SK-N-SH (cell line): ENCODE measurements at regions of chr11 and their contacts with region 1.

Region 1: GRCh38 chr11:69642913-69643632 is 2.1 kb downstream of the CCND1 start:
- DNase-seq: peak; percentile 84
- H3K4me3 ChIP-seq: peak overlapping the region; percentile 95 to 96
- H3K27ac ChIP-seq: peak overlapping the region; percentile 94
- H3K4me1 ChIP-seq: peaks cover 29 to 37% of the 10 kb centered on the region in 2 experiments; a peak in 3 of 4 replicates
- H3K27me3 ChIP-seq: no peaks in the 10 kb centered on the region
- CTCF ChIP-seq: peak; percentile 83
- EP300 ChIP-seq: no peak
- RAD21 ChIP-seq: peak; percentile 86

Region 2: GRCh38 chr11:69131644-69132300 is 511.3 kb before region 1 on chr11:
- CTCF ChIA-PET with region 1: interaction called, 22 read pairs
- POLR2A ChIA-PET with region 1: interaction called, 3 read pairs
- DNase-seq: peak; percentile 70
- H3K4me3 ChIP-seq: no peak overlapping the region
- H3K27ac ChIP-seq: 0 out of 4 replicates have a peak overlapping the region, but pooled peaks of 1 of the 2 experiments have one; percentile 8
- H3K4me1 ChIP-seq: peaks cover 0 to 15% of the 10 kb centered on the region in 2 experiments; a peak in 1 of 4 replicates
- H3K27me3 ChIP-seq: no peaks in the 10 kb centered on the region
- CTCF ChIP-seq: peak; percentile 75
- EP300 ChIP-seq: no peak
- RAD21 ChIP-seq: peak; percentile 78

Region 3: DNA sequence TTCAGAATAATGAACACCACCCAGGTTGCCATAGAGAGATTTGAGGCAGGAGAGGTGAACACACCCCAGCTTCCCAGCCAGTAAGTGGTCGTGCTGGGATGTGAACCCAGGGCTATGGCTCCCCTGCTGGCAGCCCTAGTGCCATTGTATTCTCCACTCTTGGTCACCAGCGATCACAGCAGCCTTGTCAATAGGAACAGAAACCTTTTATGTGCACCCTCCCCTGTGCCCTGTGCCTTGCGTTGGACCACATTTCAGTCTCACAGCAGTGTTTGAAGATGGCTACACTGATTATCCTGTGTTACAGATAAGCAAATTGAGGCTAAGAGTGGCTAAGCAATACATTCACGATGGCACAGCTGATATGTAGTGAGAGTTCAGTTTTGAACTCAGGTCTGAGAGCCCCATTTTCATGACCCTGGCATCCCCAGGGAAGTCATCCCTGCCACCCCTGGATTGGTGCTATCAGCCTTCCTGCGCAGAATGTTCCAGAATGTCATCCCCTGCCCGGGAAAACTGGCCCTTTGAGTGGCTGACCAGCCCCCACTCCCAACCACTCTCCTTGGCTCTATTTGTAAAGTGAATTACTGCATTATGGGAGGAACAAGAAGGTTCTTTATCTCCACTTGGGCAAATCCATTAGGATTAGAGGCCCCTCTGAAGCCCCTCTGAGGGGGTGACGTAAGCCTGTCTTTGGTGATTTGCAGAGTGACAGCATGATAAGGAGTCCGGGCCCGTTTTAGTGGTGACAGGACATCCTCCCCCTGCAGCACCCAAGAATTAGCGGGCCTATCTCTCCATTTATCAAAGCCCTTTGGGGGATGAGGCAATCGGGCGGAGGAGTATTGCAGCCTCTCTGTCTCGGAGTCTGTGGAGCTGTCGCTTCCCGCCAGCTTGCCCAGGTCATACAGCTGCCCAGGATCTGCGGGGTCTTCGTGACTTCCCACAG is 456.5 kb before region 1 on chr11:
- CTCF ChIA-PET with region 1: interaction called, 10 read pairs
- POLR2A ChIA-PET with region 1: interaction called, 4 read pairs
- DNase-seq: peak; percentile 88
- H3K4me3 ChIP-seq: no peak overlapping the region
- H3K27ac ChIP-seq: peak overlapping the region in 1 of 2 experiments; percentile 94; a peak in 3 of 4 replicates
- H3K4me1 ChIP-seq: peaks cover 0 to 14% of the 10 kb centered on the region in 2 experiments; a peak in 2 of 4 replicates
- H3K27me3 ChIP-seq: peaks cover 4% of the 10 kb centered on the region; the same call in 1 of the 2 replicates
- CTCF ChIP-seq: peak; percentile 26
- EP300 ChIP-seq: peak; percentile 62 to 96; a peak in 3 of 4 replicates
- RAD21 ChIP-seq: peak; percentile 65

Region 4: DNA sequence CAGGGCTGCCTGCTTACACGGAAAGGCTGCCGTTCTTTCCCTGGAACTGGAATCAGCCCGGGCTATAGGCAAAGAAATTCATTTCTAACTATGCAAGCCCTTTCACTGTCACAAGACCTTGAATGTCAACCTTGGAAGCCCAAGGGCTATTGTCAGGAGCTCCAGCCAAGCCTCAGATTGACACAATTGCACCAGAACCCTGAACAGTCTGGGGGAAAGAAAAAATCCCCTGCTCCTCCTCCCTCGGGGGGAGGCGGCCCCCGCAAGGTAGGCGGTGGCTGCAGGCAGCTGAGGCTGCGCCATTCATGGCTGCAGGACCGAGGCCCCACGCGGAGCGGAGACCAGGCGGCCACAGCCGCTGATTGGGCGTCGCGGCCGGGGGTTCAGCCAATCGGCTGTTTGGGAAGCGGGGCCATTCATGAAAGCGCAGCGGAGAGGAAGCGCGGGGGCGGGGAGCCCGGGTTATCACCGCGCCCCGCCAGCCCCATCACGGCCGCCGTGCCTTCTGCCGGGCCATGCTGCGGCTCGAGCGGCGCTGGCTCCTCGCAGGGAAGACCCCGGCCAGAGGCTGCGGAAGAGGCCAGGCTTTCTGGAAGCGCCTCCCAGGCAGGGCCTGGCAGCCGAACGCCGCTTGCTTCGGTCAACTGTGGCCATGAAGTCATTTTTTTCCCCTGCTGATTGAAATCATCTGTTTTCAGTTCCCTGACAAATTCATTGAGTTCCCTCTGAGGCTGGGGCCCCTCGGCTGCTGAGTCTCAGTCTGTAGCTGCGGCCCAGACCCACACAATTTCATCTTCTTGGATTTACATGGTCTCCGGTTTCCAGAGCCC is 199.7 kb before region 1 on chr11:
- CTCF ChIA-PET with region 1: interaction called, 17 read pairs
- POLR2A ChIA-PET with region 1: interaction called, 16 read pairs
- DNase-seq: peak; percentile 98
- H3K4me3 ChIP-seq: peak overlapping the region; percentile 38 to 49
- H3K27ac ChIP-seq: peak overlapping the region; percentile 91 to 99
- H3K4me1 ChIP-seq: peaks cover 26 to 37% of the 10 kb centered on the region in 2 experiments
- H3K27me3 ChIP-seq: no peaks in the 10 kb centered on the region
- CTCF ChIP-seq: no peak
- EP300 ChIP-seq: peak; percentile 51 to 67; a peak in 3 of 4 replicates
- RAD21 ChIP-seq: 0 out of 2 replicates have a peak, but pooled peaks have one; percentile 22

Region 5: GRCh38 chr11:69654569-69655327 is 11.7 kb after region 1 on chr11:
- CTCF ChIA-PET with region 1: interaction called, 33 read pairs
- POLR2A ChIA-PET with region 1: interaction called, 9 read pairs
- DNase-seq: peak; percentile 59
- H3K4me3 ChIP-seq: no peak overlapping the region
- H3K27ac ChIP-seq: peak overlapping the region in 1 of 2 experiments; percentile 22; a peak in 3 of 4 replicates
- H3K4me1 ChIP-seq: peaks cover 8 to 27% of the 10 kb centered on the region in 2 experiments; a peak in 2 of 4 replicates
- H3K27me3 ChIP-seq: no peaks in the 10 kb centered on the region
- CTCF ChIP-seq: no peak
- EP300 ChIP-seq: no peak
- RAD21 ChIP-seq: no peak

Region 6: DNA sequence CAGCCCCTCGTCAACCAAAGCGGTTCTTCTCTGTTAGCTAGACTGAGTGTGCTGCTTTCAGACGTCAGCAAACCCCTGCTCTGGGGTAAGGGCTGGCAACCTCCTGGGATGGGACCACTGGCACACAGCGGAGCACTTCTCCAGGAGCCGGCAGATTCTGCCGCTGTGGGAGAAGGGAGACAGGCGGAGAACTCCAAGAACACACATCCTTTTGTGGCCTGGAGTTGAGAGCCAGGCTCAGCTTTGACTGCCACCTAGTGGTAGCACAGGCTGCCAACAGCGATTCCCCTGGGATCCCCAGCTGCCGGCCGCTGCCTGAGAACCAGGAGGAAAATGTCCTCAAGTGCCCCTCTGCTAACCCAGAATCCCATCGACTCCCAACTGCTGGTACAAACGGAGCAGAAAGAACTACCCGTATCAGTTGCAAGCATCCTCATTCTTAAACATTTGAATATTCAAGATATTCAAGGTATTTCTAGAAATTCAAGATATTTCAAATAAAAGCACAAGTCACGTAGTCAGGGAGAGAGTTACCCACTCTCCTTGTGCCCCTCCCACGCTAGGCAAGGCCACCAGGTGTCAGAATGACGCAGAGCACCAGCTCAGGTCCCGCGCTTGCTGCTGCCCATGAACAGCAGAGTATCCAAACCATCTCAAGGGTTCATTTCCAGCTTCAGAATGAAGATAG is 27.2 kb after region 1 on chr11:
- CTCF ChIA-PET with region 1: interaction called, 97 read pairs
- POLR2A ChIA-PET with region 1: interaction called, 5 read pairs
- DNase-seq: peak; percentile 93
- H3K4me3 ChIP-seq: no peak overlapping the region; a peak in 1 of 4 replicates
- H3K27ac ChIP-seq: peak overlapping the region; percentile 20 to 39; a peak in 2 of 4 replicates
- H3K4me1 ChIP-seq: peaks cover 8 to 20% of the 10 kb centered on the region in 2 experiments; a peak in 3 of 4 replicates
- H3K27me3 ChIP-seq: no peaks in the 10 kb centered on the region
- CTCF ChIP-seq: peak; percentile 94
- EP300 ChIP-seq: no peak
- RAD21 ChIP-seq: peak; percentile 91

Region 7: GRCh38 chr11:70251659-70252321 is 608.7 kb after region 1 on chr11:
- CTCF ChIA-PET with region 1: no interaction called
- POLR2A ChIA-PET with region 1: no interaction called
- DNase-seq: no peak
- H3K4me3 ChIP-seq: no peak overlapping the region
- H3K27ac ChIP-seq: no peak overlapping the region
- H3K4me1 ChIP-seq: no peaks in the 10 kb centered on the region; a peak in 1 of 4 replicates
- H3K27me3 ChIP-seq: no peaks in the 10 kb centered on the region
- CTCF ChIP-seq: no peak
- EP300 ChIP-seq: no peak
- RAD21 ChIP-seq: no peak